ENCODE measurements at regions of chr1 and their contacts with region 1.

Region 1: GRCh38 chr1:23634842-23635651 is 56.6 kb upstream of the RPL11 start:
- DNase-seq: peak; percentile 69
- H3K4me3 Mint-ChIP-seq: peak overlapping the region; percentile 29
- H3K27ac Mint-ChIP-seq: peak overlapping the region; percentile 60
- H3K4me1 Mint-ChIP-seq: peaks cover 27% of the 10 kb centered on the region
- H3K27me3 Mint-ChIP-seq: peaks cover 25% of the 10 kb centered on the region

Region 2: DNA sequence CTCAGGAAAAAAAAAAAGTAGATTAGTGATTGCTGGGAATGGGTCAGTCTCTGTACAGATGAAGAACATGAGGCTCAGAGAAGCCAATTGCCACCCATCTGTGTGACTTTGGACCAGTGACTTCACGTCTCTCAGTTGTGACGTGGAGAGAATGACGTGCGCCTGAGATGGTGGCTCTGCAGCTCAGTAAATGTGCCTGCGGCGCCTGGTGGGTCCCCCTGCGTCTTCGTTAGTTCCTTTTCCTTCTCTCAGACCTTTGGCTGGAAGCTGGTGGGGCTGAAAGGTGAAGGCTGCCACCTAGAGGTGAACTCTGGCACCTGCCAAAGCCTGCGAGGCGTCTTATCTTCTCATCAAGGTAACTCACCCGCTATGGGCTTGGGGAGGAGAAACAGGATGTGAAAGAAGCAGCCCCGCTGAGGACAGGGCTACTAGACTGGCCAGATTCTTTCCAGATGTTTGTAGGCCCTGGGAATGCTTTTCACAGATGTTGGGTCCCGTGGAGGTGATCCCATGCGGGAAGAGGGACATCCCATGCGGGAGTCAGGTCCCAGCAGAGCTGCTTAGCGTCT is 95.3 kb before region 1 on chr1:
- CTCF ChIA-PET with region 1: interaction called, 715 read pairs
- DNase-seq: peak; percentile 96
- H3K4me3 Mint-ChIP-seq: no peak overlapping the region
- H3K27ac Mint-ChIP-seq: peak overlapping the region; percentile 63
- H3K4me1 Mint-ChIP-seq: peaks cover 28% of the 10 kb centered on the region
- H3K27me3 Mint-ChIP-seq: peaks cover 4% of the 10 kb centered on the region

Region 3: GRCh38 chr1:23577056-23578004 is 57.7 kb before region 1 on chr1:
- CTCF ChIA-PET with region 1: interaction called, 53 read pairs
- DNase-seq: peak; percentile 68
- H3K4me3 Mint-ChIP-seq: peak overlapping the region; percentile 23
- H3K27ac Mint-ChIP-seq: peak overlapping the region; percentile 94
- H3K4me1 Mint-ChIP-seq: peaks cover 52% of the 10 kb centered on the region
- H3K27me3 Mint-ChIP-seq: peaks cover 16% of the 10 kb centered on the region

Region 4: DNA sequence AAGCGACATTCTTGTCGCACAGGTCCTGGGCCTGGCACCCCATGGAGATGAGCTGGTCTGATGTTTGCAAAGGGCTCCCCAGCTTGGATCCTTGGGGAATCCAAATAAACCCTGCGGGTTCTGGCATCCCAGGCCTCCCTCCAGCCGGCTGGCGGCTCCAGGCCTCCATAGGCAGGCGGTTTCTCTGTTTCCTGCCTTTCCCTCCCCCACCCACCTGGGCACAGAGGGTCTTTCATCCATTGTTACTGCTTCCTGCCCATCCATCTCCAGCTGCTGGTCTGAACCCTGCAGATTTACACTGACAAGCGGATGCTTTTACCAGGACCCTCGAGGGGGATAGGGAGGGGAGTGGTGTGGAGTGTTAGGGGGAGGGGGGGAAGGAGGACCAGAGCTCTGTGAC is 36.6 kb before region 1 on chr1:
- CTCF ChIA-PET with region 1: interaction called, 27 read pairs
- DNase-seq: no peak
- H3K4me3 Mint-ChIP-seq: no peak overlapping the region
- H3K27ac Mint-ChIP-seq: no peak overlapping the region
- H3K4me1 Mint-ChIP-seq: peaks cover 88% of the 10 kb centered on the region
- H3K27me3 Mint-ChIP-seq: no peaks in the 10 kb centered on the region

Region 5: DNA sequence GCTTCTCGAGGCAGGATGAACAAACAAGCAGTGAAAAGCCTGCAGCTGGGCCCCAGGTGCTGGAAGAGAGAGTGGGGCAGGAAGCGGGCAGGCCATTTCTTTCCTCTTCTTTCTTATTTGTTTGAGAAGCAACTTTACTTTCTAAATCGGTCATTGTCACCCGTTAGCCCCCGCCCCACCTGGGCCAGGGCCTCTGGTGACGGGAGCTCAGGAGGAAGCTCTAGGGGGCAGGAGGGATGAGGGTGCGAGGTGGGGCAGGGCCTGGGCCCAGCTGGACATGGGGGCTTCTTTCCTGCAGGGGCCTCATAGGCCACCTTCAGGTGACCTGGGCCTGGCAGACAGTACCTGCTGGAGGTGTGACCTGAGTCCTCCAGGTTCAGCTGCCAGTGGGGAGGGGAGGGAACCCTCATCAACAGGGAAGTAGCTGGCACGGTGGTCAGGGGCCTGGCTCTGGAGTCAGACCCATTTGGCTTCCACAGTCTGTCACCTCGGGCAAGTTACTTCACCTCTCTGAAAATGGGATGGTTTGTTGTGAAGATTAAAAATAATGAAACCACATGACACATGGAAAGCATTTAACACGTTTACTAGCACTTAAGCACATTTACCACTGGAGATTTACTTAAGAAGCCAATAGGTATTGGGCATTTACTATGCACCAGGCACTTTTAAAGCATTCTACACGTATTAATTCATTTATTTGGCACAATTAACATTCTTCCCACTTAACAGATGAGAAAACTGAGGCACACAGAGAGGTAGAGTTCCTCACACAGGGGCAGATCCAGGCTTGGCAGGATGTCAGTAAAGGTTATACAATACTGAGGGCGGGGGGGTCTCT is 21.6 kb before region 1 on chr1:
- CTCF ChIA-PET with region 1: interaction called, 31 read pairs
- DNase-seq: peak; percentile 83
- H3K4me3 Mint-ChIP-seq: peak overlapping the region; percentile 37
- H3K27ac Mint-ChIP-seq: peak overlapping the region; percentile 98
- H3K4me1 Mint-ChIP-seq: peaks cover 78% of the 10 kb centered on the region
- H3K27me3 Mint-ChIP-seq: peaks cover 1% of the 10 kb centered on the region

Region 6: GRCh38 chr1:23619299-23620188 is 15.5 kb before region 1 on chr1:
- CTCF ChIA-PET with region 1: interaction called, 31 read pairs
- DNase-seq: peak; percentile 88
- H3K4me3 Mint-ChIP-seq: peak overlapping the region; percentile 73
- H3K27ac Mint-ChIP-seq: peak overlapping the region; percentile 96
- H3K4me1 Mint-ChIP-seq: peaks cover 87% of the 10 kb centered on the region
- H3K27me3 Mint-ChIP-seq: no peaks in the 10 kb centered on the region

Region 7: GRCh38 chr1:23732363-23733224 is 97.5 kb after region 1 on chr1:
- CTCF ChIA-PET with region 1: no interaction called
- DNase-seq: no peak
- H3K4me3 Mint-ChIP-seq: no peak overlapping the region
- H3K27ac Mint-ChIP-seq: no peak overlapping the region
- H3K4me1 Mint-ChIP-seq: no peaks in the 10 kb centered on the region
- H3K27me3 Mint-ChIP-seq: no peaks in the 10 kb centered on the region